ENCODE measurements at regions of chr12 and their contacts with region 1.

Region 1: DNA sequence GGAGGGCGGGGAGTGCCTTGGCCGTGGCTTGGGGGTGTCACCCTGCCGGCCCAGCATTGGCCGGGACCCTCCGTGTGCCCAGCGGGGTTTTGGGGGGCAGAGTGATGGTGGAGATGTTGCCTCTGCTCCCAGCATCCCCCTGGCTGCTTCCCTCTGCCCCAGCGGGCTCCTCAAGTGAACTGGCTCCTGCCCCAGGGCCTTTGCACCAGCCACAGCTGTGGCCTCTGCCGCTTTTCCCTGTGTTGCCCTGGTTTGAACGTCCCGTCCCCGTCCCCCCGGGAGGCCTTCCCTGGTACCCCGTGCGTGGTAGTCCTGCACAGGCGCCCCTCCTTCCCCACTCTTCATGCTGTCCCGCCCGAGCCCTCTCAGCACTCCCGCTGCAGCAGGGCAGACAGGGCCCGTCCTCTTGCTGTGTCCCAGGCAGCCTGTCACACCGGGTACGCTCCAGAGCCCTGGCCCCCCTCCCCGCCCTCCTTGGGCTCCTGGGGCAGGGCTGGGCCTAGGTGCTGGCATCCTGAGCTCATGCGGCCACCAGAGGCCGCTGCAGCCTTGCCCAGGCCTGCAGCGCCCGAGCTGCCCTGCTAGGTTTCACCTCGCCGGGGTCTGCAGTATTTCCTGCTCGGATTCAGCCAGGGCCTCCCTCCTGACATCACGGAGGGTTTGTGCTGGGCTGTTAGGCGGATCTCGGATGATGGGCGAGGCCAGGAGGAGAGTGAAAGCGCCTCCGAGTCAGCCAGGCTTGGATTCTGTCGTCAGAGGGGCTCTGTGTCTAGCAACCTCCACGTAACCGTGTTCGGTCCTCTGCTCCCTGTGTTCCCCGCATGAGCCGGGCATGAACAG is 9.5 kb downstream of the NOC4L start:
- DNase-seq: peak; percentile 95
- H3K4me3 ChIP-seq: peak overlapping the region in 1 of 2 experiments; percentile 33; a peak in 1 of 4 replicates
- H3K27ac ChIP-seq: no peak overlapping the region
- H3K4me1 ChIP-seq: no peaks in the 10 kb centered on the region
- H3K27me3 ChIP-seq: no peaks in the 10 kb centered on the region
- CTCF ChIP-seq: peak; percentile 87
- EP300 ChIP-seq: no peak
- RAD21 ChIP-seq: peak; percentile 89

Region 2: GRCh38 chr12:132094381-132094803 is 59.3 kb before region 1 on chr12:
- CTCF ChIA-PET with region 1: no interaction called
- POLR2A ChIA-PET with region 1: no interaction called
- DNase-seq: no peak
- H3K4me3 ChIP-seq: no peak overlapping the region
- H3K27ac ChIP-seq: no peak overlapping the region
- H3K4me1 ChIP-seq: no peaks in the 10 kb centered on the region
- H3K27me3 ChIP-seq: no peaks in the 10 kb centered on the region
- CTCF ChIP-seq: no peak
- EP300 ChIP-seq: no peak
- RAD21 ChIP-seq: no peak

Region 3: GRCh38 chr12:132140918-132141841 is 12.5 kb before region 1 on chr12:
- CTCF ChIA-PET with region 1: interaction called, 10 read pairs
- POLR2A ChIA-PET with region 1: no interaction called
- DNase-seq: no peak
- H3K4me3 ChIP-seq: no peak overlapping the region
- H3K27ac ChIP-seq: no peak overlapping the region
- H3K4me1 ChIP-seq: peaks cover 0 to 22% of the 10 kb centered on the region in 2 experiments; a peak in 1 of 4 replicates
- H3K27me3 ChIP-seq: no peaks in the 10 kb centered on the region
- CTCF ChIP-seq: no peak
- EP300 ChIP-seq: no peak
- RAD21 ChIP-seq: no peak

Region 4: GRCh38 chr12:132218915-132219314 is 65.2 kb after region 1 on chr12:
- CTCF ChIA-PET with region 1: interaction called, 13 read pairs
- POLR2A ChIA-PET with region 1: no interaction called
- DNase-seq: peak; percentile 77
- H3K4me3 ChIP-seq: no peak overlapping the region
- H3K27ac ChIP-seq: no peak overlapping the region
- H3K4me1 ChIP-seq: no peaks in the 10 kb centered on the region
- H3K27me3 ChIP-seq: peaks cover 46% of the 10 kb centered on the region
- CTCF ChIP-seq: peak; percentile 48
- EP300 ChIP-seq: no peak
- RAD21 ChIP-seq: peak; percentile 48

Region 5: GRCh38 chr12:132407451-132407961 is 253.8 kb after region 1 on chr12:
- CTCF ChIA-PET with region 1: interaction called, 12 read pairs
- POLR2A ChIA-PET with region 1: no interaction called
- DNase-seq: peak; percentile 73
- H3K4me3 ChIP-seq: peak overlapping the region in 1 of 2 experiments; percentile 20; a peak in 1 of 4 replicates
- H3K27ac ChIP-seq: no peak overlapping the region
- H3K4me1 ChIP-seq: peaks cover 0 to 9% of the 10 kb centered on the region in 2 experiments; a peak in 1 of 4 replicates
- H3K27me3 ChIP-seq: peaks cover 64% of the 10 kb centered on the region
- CTCF ChIP-seq: no peak
- EP300 ChIP-seq: no peak
- RAD21 ChIP-seq: no peak

Measured in SK-N-SH (cell line).